Activated T-helper 1 cell treated with anti-CD3 and anti-CD28 coated beads, Interleukin-12 subunit alpha, Interleukin-12 subunit beta, Interleukin-2, Interleukin-4 antibody, amounts not matched to agents 30 ng/mL and 10 ng/mL and 1 ng/mL, durations not matched to agents 14 hours and 24 hours and 36 hours (primary cell): ENCODE measurements at regions of chr9 and their contacts with region 1.

Region 1: DNA sequence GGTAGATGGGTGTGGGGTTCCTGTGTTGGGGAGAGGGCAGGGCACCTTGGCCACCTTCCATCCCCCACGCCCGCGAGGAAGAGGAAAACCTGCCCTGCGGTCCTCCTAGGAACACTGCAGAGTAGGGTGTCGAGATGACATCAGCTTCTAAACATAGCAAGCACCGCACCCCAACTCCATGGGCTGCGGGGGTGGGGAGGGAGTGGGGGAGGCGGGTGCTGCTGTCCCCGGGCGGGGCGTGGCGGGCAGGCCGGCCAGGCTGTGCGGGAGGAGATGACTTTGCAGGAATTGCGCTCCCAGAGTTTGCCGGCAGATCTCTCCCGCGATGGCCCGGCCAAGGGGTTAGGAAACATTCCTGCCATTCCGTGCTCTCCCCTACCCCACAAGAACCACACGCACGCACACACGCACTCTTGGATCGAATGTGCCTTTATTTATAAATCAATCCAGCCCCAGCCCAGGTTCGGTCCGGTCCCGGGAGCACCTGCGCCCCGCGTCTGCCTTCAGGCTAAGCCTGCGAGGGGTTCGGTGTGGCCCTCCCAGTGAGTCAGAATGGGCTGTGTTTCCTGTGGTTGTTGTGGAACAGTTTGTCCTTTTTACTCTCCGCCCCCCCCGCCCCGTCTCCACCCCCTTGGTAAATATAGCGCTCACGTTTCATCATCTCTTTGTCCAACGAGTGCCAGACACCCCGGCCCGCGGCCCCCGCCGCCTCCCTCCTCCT is 5.2 kb upstream of the KLF9 start:
- DNase-seq: peak; percentile 74
- H3K4me3 Mint-ChIP-seq: peak overlapping the region; percentile 83
- H3K27ac Mint-ChIP-seq: peak overlapping the region; percentile 99
- H3K4me1 Mint-ChIP-seq: peaks cover 46% of the 10 kb centered on the region
- H3K27me3 Mint-ChIP-seq: peaks cover 3% of the 10 kb centered on the region

Region 2: DNA sequence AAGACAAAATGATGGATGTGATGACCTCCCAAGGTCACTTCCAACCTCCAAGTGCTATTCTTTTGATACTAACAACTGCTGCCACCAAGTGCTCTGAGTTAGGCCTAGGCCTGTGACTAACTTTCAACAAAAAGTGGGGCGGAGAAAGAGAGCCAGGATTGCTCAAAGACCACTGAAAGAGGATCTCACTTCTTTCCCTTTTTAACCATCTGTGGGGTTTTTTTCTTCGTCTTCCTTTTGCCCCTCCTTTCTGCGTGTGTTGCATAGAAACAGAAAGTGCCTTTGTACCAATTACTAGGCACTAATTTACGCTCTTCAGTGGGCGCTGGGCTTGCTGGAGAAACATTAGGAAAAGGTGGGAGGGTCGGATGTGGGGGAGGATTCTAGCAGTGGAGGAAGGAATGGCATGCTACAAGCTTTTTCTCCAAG is 13.3 kb before region 1 on chr9:
- intact Hi-C with region 1: loop called (anchors 1 kb)
- DNase-seq: no peak
- H3K4me3 Mint-ChIP-seq: peak overlapping the region; percentile 78
- H3K27ac Mint-ChIP-seq: peak overlapping the region; percentile 85
- H3K4me1 Mint-ChIP-seq: peaks cover 70% of the 10 kb centered on the region
- H3K27me3 Mint-ChIP-seq: no peaks in the 10 kb centered on the region

Region 3: DNA sequence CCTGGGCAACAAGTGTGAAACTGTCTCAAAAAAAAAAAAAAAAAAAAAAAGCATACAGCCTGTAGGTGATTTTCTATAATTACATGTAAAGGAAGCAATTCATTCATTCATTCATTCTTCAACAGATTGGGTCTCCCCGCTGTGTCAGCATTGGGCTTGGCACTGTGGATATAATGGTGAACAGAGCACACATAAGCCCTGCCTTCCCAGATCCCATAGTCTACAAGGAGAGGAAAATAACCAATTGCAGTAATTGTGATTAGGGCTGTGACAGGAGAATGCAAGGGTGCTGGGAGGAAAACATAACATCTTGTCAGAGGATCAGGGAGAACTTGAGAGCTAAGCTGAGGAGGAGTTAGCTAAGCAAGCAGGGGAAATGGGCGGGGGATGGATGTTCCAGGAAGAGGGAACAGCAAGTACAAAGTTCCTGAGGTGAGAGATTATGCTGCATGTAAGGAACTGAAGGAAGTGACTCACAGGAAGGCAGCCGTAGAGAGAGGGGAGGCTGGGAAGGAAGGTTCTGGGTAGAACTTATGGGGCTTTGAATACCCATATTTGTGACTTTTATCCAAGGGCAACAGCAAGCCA is 18.7 kb after region 1 on chr9:
- intact Hi-C with region 1: no loop called
- DNase-seq: no peak
- H3K4me3 Mint-ChIP-seq: no peak overlapping the region
- H3K27ac Mint-ChIP-seq: peak overlapping the region; percentile 2
- H3K4me1 Mint-ChIP-seq: peaks cover 14% of the 10 kb centered on the region
- H3K27me3 Mint-ChIP-seq: no peaks in the 10 kb centered on the region

Region 4: DNA sequence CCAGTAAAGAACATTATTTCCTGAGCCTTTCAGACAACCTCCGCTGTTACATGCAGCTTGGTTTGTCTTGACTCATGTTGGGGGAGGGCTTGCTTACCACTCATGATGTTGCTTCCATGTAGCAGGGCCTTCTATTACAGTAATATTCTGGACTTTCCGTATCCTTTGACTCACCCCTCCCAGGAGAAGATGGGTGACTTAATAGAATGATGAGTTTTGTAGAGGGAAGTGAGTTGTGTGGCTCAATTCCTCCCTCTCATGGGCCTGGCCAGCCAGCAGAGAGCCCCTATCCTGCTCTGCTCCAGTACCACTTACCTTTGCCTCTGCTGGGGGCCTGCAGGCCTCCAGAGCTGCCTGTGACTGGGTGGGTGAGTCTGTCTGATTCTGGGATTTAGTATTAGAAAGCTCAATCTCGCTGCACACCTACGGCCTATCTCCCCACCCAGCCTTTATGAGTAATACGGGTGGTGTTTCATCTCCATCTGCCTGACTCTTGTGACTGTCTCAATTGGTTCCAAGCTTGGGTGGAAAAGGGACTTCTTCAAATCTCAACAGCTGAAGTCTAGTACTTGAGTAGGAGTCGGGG is 47.4 kb after region 1 on chr9:
- intact Hi-C with region 1: loop called (anchors 1 kb)
- DNase-seq: no peak
- H3K4me3 Mint-ChIP-seq: no peak overlapping the region
- H3K27ac Mint-ChIP-seq: peak overlapping the region; percentile 47
- H3K4me1 Mint-ChIP-seq: peaks cover 48% of the 10 kb centered on the region
- H3K27me3 Mint-ChIP-seq: no peaks in the 10 kb centered on the region

Region 5: GRCh38 chr9:70494221-70494620 is 74.5 kb after region 1 on chr9:
- intact Hi-C with region 1: no loop called
- DNase-seq: no peak
- H3K4me3 Mint-ChIP-seq: no peak overlapping the region
- H3K27ac Mint-ChIP-seq: no peak overlapping the region
- H3K4me1 Mint-ChIP-seq: peaks cover 43% of the 10 kb centered on the region
- H3K27me3 Mint-ChIP-seq: no peaks in the 10 kb centered on the region

Region 6: DNA sequence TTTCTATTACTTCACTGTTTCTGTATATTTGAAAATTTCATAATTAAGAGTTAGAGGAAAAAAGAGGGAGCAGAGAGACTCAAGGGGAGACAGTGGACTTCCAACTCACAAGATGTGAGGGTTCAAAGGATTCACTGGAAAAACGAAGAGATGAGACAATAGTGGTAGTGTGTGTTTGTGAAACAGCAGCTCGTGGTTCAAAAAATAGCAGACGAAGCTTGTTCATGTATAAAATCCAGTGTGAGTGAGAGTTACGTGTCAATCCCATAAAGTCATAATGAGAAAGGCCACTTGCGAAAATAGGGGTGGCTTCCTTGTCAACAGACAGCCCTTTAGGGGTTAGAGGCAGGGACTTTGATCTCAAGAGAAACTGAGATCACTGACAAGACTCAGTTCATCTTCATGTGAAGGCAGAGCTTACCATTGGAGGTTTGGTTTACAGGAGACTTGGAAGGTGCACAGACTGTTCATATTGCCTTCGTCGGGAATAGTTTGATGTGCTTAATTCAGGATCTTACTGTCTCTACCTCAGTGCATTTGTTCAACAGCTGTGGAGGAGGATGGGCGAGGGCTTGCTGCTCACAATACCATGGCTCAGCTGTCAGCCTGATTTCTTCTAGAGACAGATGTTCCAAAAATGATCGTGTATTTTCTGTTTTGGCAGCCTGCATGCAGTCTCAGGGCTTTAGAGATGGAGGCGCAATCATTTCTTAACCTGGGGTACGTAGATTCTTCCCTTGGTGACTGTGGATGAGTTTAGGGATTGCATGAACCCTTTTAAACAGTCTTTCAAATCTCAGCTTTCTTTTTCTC is 100.4 kb after region 1 on chr9:
- intact Hi-C with region 1: loop called (anchors 1 kb)
- DNase-seq: peak; percentile 6
- H3K4me3 Mint-ChIP-seq: peak overlapping the region; percentile 53
- H3K27ac Mint-ChIP-seq: peak overlapping the region; percentile 68
- H3K4me1 Mint-ChIP-seq: peaks cover 17% of the 10 kb centered on the region
- H3K27me3 Mint-ChIP-seq: no peaks in the 10 kb centered on the region

Region 7: DNA sequence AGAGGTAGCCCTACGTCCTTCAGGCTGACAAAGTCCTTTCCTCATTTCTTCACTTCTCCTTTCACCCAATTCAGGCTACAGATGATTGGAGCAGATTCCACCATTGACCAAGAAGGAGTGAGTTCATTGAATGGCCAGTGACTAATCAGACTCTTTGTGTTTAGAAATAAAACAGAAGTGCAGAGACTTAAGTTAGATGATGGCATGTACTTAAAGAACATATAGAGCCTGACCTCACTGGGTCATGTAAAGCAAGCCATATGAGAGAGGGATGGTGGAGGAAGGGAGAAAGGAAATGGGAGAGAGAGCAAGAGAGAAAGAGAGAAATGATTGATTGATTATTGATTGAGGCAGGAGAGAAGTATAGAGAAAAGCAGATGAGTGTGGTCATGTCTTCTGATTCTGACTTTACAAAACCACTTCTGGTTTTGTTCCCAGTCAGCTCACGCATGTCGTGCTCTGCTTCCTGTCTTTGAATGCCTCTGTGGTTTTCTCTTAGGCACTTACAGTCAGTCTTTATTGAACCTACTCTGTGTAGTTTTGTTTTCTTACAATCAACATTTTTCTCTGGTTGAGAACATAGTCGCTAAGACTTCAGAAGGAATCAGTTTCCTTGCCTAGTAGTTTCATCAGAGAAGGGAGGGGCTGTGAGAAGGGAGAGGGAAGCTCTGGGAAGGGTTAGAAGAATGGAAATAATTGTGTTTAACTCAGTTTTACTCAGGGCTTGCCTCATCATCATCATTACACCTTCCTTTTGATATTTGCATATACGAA is 143.9 kb after region 1 on chr9:
- intact Hi-C with region 1: loop called (anchors 1 kb)
- DNase-seq: peak; percentile 70
- H3K4me3 Mint-ChIP-seq: peak overlapping the region; percentile 69
- H3K27ac Mint-ChIP-seq: peak overlapping the region; percentile 89
- H3K4me1 Mint-ChIP-seq: peaks cover 72% of the 10 kb centered on the region
- H3K27me3 Mint-ChIP-seq: peaks cover 2% of the 10 kb centered on the region

Region 8: DNA sequence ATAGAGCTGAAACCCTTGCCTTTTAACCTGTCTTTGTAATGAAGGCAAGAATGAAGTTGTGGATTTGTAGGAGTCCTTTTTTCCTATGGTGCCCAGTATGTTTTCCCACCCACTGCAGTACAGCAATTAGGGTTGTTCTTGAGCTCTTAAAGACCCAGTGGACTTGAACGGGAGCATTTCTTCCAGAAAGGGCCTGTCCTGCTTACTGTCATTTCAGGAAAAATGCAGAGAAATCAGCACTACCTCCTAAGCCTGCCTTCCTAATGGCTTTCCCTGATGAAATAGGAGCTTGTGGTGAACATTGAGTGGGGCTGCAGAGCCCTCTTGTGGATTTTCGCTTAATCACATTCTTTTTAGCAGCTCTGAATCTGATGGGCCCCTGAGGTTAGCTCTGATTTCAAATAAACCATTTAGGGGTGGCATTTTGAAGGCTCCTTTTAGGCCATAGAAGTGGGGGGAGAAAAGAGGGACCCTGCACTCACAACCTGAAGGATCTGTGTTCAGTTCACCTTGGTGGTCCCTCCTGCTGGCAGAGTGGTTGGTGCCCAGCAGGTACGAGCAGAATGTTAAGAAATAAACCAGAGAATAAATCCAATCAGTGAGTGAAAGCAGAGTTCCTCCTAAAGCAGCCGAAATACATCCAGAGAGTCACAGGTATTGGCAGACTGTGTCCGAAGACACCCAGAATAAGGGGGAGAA is 182.8 kb after region 1 on chr9:
- intact Hi-C with region 1: loop called (anchors 1 kb)
- DNase-seq: peak; percentile 23
- H3K4me3 Mint-ChIP-seq: no peak overlapping the region
- H3K27ac Mint-ChIP-seq: no peak overlapping the region
- H3K4me1 Mint-ChIP-seq: peaks cover 5% of the 10 kb centered on the region
- H3K27me3 Mint-ChIP-seq: peaks cover 2% of the 10 kb centered on the region